ENCODE measurements at regions of chr17 and their contacts with region 1.

Region 1: GRCh38 chr17:58421711-58422110 is 4.4 kb upstream of the RNF43 start:
- DNase-seq: no peak

Region 2: GRCh38 chr17:58284320-58285067 is 137.2 kb before region 1 on chr17:
- in situ Hi-C with region 1: loop called (anchors 10 kb)
- DNase-seq: no peak

Region 3: GRCh38 chr17:58303971-58304725 is 117.6 kb before region 1 on chr17:
- in situ Hi-C with region 1: no loop called
- DNase-seq: peak; percentile 78

Measured in SK-MEL-5 (cell line).